ENCODE measurements at regions of chr18 and their contacts with region 1.

Region 1: DNA sequence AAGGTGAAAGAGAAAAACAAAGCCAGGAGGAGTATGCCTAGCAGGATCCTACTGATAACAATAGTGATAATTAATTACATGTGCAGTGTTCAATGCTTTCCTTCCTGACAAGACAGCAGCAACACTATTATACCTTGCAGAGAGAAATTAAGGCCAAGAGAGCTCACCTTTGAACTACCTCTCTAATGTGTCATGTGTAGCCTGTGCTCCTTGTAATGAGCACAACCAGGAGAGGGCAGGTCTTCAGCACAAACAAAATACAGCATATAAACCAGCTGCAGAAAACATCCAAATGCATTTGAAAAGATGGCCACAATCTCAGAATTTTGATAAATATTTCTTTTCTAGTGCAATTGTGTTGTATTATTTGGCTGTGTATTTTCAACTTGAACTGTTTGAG is 1425.7 kb downstream of the DSC3 start:
- DNase-seq: no peak
- ATAC-seq: peak in 2 of 4 donors; percentile 50 to 53
- H3K4me3 ChIP-seq: no peak overlapping the region
- H3K27ac ChIP-seq: no peak overlapping the region
- H3K4me1 ChIP-seq: no peaks in the 10 kb centered on the region
- H3K27me3 ChIP-seq: no peaks in the 10 kb centered on the region
- CTCF ChIP-seq: peak in 9 of 12 donors; percentile 12 to 42 (median 31)
- POLR2A ChIP-seq: no peak

Region 2: DNA sequence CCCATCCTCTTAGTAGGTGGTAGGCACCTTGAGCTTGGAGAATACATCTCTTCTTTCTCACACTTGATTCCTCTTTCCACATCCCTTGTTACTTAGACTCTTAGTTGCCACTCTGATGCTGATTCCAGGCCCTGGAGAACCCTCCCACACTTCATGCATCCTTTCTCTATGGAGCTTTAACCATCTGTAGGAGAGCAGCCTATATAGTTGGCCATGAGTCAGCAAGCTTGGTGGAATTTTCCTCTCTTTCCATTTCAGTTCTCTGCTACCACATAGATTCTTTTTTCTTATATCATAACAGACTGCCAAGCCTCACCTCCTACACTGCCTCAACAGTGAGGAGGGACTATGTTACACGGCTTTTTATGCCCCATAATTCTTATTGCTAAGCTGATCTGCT is 588.3 kb before region 1 on chr18:
- intact Hi-C with region 1: no loop called
- DNase-seq: no peak
- ATAC-seq: no peak
- H3K4me3 ChIP-seq: no peak overlapping the region
- H3K27ac ChIP-seq: no peak overlapping the region
- H3K4me1 ChIP-seq: no peaks in the 10 kb centered on the region
- H3K27me3 ChIP-seq: no peaks in the 10 kb centered on the region
- CTCF ChIP-seq: no peak
- POLR2A ChIP-seq: no peak

Region 3: GRCh38 chr18:29664278-29665036 is 47.6 kb after region 1 on chr18:
- intact Hi-C with region 1: loop called in 1 of 10 experiments (anchors 5 kb)
- DNase-seq: no peak
- ATAC-seq: no peak
- H3K4me3 ChIP-seq: no peak overlapping the region
- H3K27ac ChIP-seq: no peak overlapping the region
- H3K4me1 ChIP-seq: peaks cover 0 to 2% (median 0%) of the 10 kb centered on the region in 12 donors
- H3K27me3 ChIP-seq: no peaks in the 10 kb centered on the region
- CTCF ChIP-seq: no peak
- POLR2A ChIP-seq: no peak

Region 4: GRCh38 chr18:29779096-29779495 is 162.2 kb after region 1 on chr18:
- intact Hi-C with region 1: no loop called
- DNase-seq: no peak
- ATAC-seq: no peak
- H3K4me3 ChIP-seq: no peak overlapping the region
- H3K27ac ChIP-seq: no peak overlapping the region
- H3K4me1 ChIP-seq: no peaks in the 10 kb centered on the region
- H3K27me3 ChIP-seq: no peaks in the 10 kb centered on the region
- CTCF ChIP-seq: no peak
- POLR2A ChIP-seq: no peak

Measured in heart left ventricle (tissue), 16 donors.